Heart right ventricle (tissue), 16 donors: ENCODE measurements at regions of chr17 and their contacts with region 1.

Region 1: GRCh38 chr17:64048805-64049204 is 28.4 kb upstream of the ICAM2 start:
- DNase-seq: no peak
- ATAC-seq: no peak
- H3K4me3 ChIP-seq: no peak overlapping the region
- H3K27ac ChIP-seq: no peak overlapping the region
- H3K4me1 ChIP-seq: peaks cover 0 to 10% (median 0%) of the 10 kb centered on the region in 9 donors
- H3K27me3 ChIP-seq: no peaks in the 10 kb centered on the region
- CTCF ChIP-seq: no peak

Region 2: DNA sequence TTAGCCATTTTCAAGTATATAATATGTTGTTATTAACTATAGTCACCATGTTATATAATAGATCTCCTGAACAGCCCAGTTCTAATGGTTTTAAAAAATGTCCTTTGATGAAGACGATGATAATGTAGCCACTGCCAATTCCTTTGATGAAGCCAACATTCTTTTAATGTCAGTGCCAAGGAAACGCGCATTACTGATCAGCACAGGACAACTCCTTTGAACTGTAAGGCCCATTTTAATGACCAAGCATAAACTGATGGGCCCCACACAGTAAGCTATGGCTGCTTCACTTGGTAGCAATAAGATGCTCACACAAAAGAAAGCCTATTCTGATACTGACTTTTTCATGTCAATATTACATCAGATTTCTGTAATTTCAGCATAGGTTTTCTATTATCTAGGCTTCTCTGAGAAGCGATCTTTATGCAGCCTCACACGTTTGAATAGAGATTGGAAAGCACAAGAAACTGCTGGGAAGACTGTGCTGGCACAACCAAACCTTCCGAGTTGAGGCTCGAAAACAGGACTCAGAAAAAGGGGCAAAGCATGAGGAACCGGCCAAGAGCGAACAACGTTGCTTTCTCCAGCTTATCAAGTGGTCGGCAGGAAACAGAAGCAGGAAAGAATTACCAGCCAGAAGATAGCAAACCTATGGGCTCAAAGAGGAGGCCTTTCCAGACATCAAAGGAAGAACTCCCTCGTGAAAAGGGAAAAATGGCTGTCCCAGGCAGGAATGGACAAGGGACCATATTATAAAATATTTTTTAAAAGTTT is 61.8 kb after region 1 on chr17:
- intact Hi-C with region 1: loop called in 1 of 10 experiments (anchors 5 kb)
- DNase-seq: no peak
- ATAC-seq: no peak
- H3K4me3 ChIP-seq: no peak overlapping the region
- H3K27ac ChIP-seq: no peak overlapping the region
- H3K4me1 ChIP-seq: peaks cover 0 to 28% (median 5%) of the 10 kb centered on the region in 9 donors
- H3K27me3 ChIP-seq: no peaks in the 10 kb centered on the region
- CTCF ChIP-seq: no peak